Activated T-helper 1 cell treated with anti-CD3 and anti-CD28 coated beads, Interleukin-12 subunit alpha, Interleukin-12 subunit beta, Interleukin-2, Interleukin-4 antibody, amounts not matched to agents 30 ng/mL and 10 ng/mL and 1 ng/mL, durations not matched to agents 14 hours and 24 hours and 36 hours (primary cell): ENCODE measurements at regions of chr1 and their contacts with region 1.

Region 1: GRCh38 chr1:41573785-41574713 is 89.6 kb upstream of the EDN2 start:
- DNase-seq: peak; percentile 73
- H3K4me3 Mint-ChIP-seq: no peak overlapping the region
- H3K27ac Mint-ChIP-seq: peak overlapping the region; percentile 52
- H3K4me1 Mint-ChIP-seq: peaks cover 65% of the 10 kb centered on the region
- H3K27me3 Mint-ChIP-seq: no peaks in the 10 kb centered on the region

Region 2: GRCh38 chr1:41053316-41053715 is 520.7 kb before region 1 on chr1:
- intact Hi-C with region 1: no loop called
- DNase-seq: no peak
- H3K4me3 Mint-ChIP-seq: no peak overlapping the region
- H3K27ac Mint-ChIP-seq: no peak overlapping the region
- H3K4me1 Mint-ChIP-seq: no peaks in the 10 kb centered on the region
- H3K27me3 Mint-ChIP-seq: no peaks in the 10 kb centered on the region

Region 3: DNA sequence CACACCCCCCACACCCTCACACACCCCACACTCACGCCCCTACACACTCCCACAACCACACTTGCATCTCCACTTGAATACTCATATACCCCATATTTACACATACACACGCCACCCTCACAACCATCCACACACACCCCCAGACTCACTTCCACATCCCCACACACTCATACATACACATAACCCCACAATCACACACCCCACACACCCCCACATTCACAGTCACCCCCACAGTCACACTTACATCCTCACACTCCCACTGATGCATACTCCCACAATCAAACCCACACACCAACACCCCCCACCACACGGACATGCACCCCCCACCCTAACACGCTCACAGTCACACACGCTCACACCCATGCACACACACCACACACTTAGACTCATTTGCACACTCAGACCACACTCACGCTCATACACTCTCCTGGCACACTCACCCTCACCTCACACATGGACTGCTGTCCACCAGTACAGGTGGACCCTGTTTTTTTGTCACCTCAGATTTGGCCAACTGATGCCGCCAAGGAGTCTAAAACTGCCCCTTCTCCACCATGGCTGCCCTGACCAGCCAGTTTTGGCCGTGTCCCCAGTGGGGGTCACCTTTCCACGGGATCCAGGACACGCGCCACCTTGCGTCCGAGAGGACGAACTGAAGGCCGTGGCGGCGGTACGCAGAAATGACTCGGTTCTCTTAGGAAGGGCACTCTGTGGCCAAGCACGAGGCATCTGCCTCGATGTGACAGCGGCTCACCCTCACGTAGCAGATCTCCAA is 44.2 kb before region 1 on chr1:
- intact Hi-C with region 1: no loop called
- DNase-seq: no peak
- H3K4me3 Mint-ChIP-seq: no peak overlapping the region
- H3K27ac Mint-ChIP-seq: peak overlapping the region; percentile 69
- H3K4me1 Mint-ChIP-seq: peaks cover 8% of the 10 kb centered on the region
- H3K27me3 Mint-ChIP-seq: no peaks in the 10 kb centered on the region

Region 4: GRCh38 chr1:41622859-41623723 is 49.0 kb after region 1 on chr1:
- intact Hi-C with region 1: loop called (anchors 5 kb)
- DNase-seq: no peak
- H3K4me3 Mint-ChIP-seq: peak overlapping the region; percentile 72
- H3K27ac Mint-ChIP-seq: peak overlapping the region; percentile 63
- H3K4me1 Mint-ChIP-seq: peaks cover 72% of the 10 kb centered on the region
- H3K27me3 Mint-ChIP-seq: no peaks in the 10 kb centered on the region

Region 5: GRCh38 chr1:41728403-41729202 is 154.6 kb after region 1 on chr1:
- intact Hi-C with region 1: loop called (anchors 5 kb)
- DNase-seq: peak; percentile 47
- H3K4me3 Mint-ChIP-seq: peak overlapping the region; percentile 34
- H3K27ac Mint-ChIP-seq: peak overlapping the region; percentile 84
- H3K4me1 Mint-ChIP-seq: peaks cover 39% of the 10 kb centered on the region
- H3K27me3 Mint-ChIP-seq: peaks cover 1% of the 10 kb centered on the region

Region 6: DNA sequence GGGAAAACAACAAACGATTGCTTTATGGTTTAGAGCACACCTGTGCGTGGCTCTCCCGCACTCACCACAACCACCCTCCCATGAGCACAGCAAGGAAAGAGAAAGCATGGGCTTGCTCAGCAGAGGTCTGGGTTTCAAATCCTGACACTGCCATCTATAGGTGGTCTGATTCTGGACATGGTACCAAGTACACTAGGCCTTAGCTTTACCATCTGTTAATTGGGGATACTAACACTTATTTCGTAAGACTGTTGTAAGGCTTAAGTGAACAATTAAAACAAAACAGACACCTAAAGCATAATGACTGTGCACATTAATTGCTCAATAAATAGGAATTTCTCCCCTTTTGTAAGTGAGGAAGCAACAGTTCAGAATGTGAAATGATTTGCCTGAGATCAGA is 294.6 kb after region 1 on chr1:
- intact Hi-C with region 1: loop called (anchors 1 kb)
- DNase-seq: peak; percentile 44
- H3K4me3 Mint-ChIP-seq: no peak overlapping the region
- H3K27ac Mint-ChIP-seq: peak overlapping the region; percentile 54
- H3K4me1 Mint-ChIP-seq: peaks cover 26% of the 10 kb centered on the region
- H3K27me3 Mint-ChIP-seq: no peaks in the 10 kb centered on the region

Region 7: DNA sequence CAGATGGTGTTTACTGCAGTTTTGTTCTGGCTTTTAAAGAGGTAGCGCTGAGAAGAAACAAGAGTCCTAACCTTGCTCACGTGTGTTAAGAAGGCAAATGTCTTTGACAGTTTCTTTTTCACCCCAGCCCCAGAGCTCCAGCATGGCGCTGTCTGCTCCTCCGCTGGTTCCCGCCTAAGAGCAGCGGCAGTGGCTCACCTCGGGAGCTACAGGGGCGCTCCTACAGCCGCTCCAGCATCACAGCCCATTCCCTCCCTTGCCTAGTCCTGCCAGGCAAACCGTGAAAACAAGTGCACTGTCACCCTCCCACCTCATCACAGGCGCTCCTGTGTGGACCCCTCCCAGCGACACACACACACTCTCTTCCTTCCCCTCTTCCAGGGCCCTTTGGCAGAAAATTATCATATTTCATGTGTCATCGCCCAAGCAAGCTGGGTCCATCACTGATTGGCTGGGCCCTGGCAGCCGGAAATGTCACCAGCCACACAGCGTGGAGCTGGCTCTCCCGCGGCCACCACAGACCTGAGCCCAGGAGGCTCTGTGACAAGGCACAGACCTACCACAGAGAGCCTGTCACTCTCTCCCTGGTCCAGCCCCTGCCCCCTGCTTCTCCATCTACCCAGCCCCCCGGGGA is 345.8 kb after region 1 on chr1:
- intact Hi-C with region 1: loop called (anchors 5 kb)
- DNase-seq: peak; percentile 83
- H3K4me3 Mint-ChIP-seq: peak overlapping the region; percentile 86
- H3K27ac Mint-ChIP-seq: peak overlapping the region; percentile 95
- H3K4me1 Mint-ChIP-seq: peaks cover 59% of the 10 kb centered on the region
- H3K27me3 Mint-ChIP-seq: peaks cover 4% of the 10 kb centered on the region

Region 8: DNA sequence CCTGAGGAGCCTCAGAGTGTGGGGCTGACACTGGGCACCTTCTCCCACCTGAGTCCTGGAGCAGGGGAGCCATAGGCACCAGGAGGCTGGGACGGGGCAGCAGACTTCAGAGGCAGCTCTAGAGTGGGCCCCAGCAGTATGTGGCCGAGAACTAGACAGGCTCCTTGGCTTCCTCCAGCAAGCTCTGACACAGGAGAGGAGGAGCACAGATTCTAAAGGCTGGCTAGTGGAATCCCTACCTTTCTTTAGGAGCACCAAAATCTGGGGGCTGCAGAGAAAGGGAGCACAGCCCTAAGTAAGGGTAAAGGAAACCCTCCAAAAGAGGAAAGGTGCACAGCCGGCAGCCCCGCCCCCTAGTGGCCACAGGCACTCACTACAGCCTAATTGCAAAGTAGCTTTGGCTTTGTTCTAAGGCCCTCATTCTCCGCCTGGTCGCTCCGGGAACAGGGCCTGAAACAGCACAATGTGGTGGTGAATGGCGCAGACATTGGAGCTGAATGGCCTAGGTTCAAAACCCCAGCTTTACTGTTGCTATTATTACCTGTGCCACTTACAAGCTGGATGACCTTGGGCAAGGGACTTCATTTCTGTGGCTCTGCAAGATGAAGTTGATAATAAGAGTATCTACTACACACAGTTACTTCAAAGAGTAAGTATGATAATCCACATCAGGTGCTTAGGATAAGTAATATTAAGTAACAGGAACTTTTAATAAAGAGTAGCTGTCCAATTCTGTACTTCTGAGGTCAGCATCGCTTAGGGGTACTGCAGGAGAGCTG is 599.3 kb after region 1 on chr1:
- intact Hi-C with region 1: loop called (anchors 1 kb)
- DNase-seq: peak; percentile 35
- H3K4me3 Mint-ChIP-seq: no peak overlapping the region
- H3K27ac Mint-ChIP-seq: no peak overlapping the region
- H3K4me1 Mint-ChIP-seq: no peaks in the 10 kb centered on the region
- H3K27me3 Mint-ChIP-seq: no peaks in the 10 kb centered on the region